Activated CD4-positive, alpha-beta memory T cell treated with anti-CD3 and anti-CD28 coated beads for 36 hours (primary cell): ENCODE measurements at regions of chr5 and their contacts with region 1.

Region 1: DNA sequence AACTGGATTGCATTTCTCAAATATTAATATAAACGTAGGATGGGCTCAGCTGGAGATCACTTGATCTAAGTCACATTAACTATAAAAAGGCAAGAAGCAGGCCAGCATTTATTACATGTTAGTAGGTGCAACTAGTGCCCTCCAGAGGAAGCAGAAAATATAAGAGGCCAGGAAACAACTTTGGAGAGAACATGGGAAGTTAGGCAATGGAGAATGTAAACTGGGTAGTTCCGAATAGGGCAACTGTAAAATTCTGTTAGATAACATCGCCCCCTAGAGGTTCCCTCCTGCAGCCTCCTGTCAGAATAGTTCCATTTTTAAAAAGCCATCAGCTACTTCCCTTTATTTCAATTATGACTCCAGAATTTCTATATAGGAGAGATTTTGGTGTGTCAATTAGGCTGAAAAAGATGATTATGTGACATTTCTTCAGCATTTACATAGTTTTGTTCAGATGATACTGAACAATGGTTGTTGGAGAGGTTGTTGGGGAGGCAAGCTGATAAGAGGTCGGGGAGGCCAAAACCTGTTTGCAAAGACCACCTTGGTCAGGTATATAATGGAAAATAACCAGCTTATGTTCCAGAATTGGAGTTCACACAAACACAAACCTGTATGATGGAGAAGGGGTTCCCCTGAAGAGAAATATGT is 22.4 kb downstream of the CCL28 start:
- DNase-seq: peak; percentile 58
- H3K4me3 Mint-ChIP-seq: no peak overlapping the region
- H3K27ac Mint-ChIP-seq: no peak overlapping the region
- H3K4me1 Mint-ChIP-seq: peaks cover 31% of the 10 kb centered on the region
- H3K27me3 Mint-ChIP-seq: no peaks in the 10 kb centered on the region

Region 2: DNA sequence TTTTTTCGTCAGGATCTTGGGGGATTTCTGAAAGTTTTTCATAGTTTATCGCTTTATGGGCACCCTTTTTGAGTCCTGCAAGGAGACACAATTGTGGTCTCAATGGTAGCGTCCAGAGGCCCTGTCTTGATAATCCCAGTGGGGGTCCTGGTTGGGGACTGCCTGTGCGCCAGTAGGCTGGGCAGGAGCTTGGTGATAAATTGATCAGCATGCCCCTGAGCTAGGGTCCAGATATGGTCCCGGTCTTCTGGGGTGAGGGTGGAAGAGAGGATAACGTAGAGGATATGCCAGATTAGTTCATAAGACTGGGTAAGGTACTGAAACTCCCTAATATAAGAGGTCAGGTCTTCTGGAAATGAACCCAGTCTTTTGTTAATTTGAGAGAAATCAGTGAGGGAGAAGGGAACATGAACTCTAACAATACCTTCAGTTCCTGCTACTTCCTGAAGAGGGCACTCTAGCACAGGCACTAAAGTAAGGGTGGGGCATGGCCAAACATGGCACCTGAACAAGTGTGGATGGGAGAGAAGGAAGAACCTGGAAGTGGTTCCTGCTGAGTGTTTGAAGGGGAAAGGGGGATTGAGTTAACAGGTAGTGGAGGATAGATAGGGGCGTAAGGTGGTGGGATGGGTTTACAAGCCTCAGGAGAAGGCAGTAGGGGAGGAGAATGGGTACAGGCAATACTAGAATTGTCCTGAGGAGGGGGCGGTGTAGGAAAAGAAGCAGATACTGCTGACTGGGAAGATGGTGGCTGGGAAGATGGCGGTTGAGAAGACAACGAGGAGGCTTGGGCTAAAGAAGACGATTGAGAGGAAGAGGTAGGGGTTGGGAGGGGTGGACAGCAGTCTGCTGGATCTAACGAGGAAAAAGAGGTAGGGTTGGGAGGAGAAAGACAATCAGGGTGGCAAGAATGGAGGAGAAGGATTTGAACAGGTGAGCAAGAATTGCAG is 315.9 kb before region 1 on chr5:
- CTCF ChIA-PET with region 1: interaction called, 30 read pairs
- POLR2A ChIA-PET with region 1: no interaction called
- intact Hi-C with region 1: loop called (anchors 1 kb)
- DNase-seq: peak; percentile 58
- H3K4me3 Mint-ChIP-seq: no peak overlapping the region
- H3K27ac Mint-ChIP-seq: no peak overlapping the region
- H3K4me1 Mint-ChIP-seq: peaks cover 39% of the 10 kb centered on the region
- H3K27me3 Mint-ChIP-seq: no peaks in the 10 kb centered on the region

Region 3: GRCh38 chr5:43110606-43111442 is 279.0 kb before region 1 on chr5:
- CTCF ChIA-PET with region 1: interaction called, 26 read pairs
- POLR2A ChIA-PET with region 1: no interaction called
- intact Hi-C with region 1: loop called (anchors 1 kb)
- DNase-seq: peak; percentile 64
- H3K4me3 Mint-ChIP-seq: peak overlapping the region; percentile 20
- H3K27ac Mint-ChIP-seq: peak overlapping the region; percentile 35
- H3K4me1 Mint-ChIP-seq: peaks cover 40% of the 10 kb centered on the region
- H3K27me3 Mint-ChIP-seq: no peaks in the 10 kb centered on the region

Region 4: GRCh38 chr5:43227655-43228054 is 162.1 kb before region 1 on chr5:
- CTCF ChIA-PET with region 1: interaction called, 75 read pairs
- POLR2A ChIA-PET with region 1: no interaction called
- intact Hi-C with region 1: loop called (anchors 1 kb)
- DNase-seq: no peak
- H3K4me3 Mint-ChIP-seq: no peak overlapping the region
- H3K27ac Mint-ChIP-seq: no peak overlapping the region
- H3K4me1 Mint-ChIP-seq: no peaks in the 10 kb centered on the region
- H3K27me3 Mint-ChIP-seq: no peaks in the 10 kb centered on the region

Region 5: GRCh38 chr5:43236653-43237355 is 153.0 kb before region 1 on chr5:
- CTCF ChIA-PET with region 1: interaction called, 75 read pairs
- POLR2A ChIA-PET with region 1: no interaction called
- intact Hi-C with region 1: loop called (anchors 1 kb)
- DNase-seq: no peak
- H3K4me3 Mint-ChIP-seq: no peak overlapping the region
- H3K27ac Mint-ChIP-seq: no peak overlapping the region
- H3K4me1 Mint-ChIP-seq: peaks cover 5% of the 10 kb centered on the region
- H3K27me3 Mint-ChIP-seq: peaks cover 4% of the 10 kb centered on the region

Region 6: DNA sequence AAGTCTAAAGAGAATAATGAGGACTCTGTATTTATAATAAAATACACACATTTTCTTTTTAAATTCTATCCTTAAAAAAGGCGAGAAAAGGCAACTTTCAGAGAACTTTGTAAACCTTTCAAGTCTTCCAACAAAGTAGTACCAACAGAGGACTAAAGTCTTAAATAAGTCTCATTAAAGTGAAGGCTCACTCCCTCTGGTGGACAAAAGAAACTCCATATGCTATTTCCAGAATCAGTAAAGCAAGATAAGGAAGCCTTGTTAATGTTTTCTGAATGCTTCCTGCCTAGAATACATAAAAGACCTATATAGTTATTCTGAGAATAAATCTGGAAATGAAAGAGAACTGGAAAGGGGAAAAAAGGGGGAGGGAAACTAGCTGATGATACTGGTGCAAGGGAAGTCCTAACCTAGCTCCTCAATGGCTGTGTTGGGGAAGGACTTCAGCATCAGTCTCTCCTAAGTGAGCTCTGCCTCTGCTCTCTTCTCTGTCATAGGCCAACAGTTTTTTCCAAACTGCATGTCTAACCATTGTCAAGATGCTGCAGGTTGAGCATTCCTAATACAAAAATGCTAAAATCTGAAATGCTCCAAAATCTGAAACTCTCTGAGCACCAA is 83.7 kb before region 1 on chr5:
- CTCF ChIA-PET with region 1: interaction called, 29 read pairs
- POLR2A ChIA-PET with region 1: no interaction called
- intact Hi-C with region 1: loop called (anchors 1 kb)
- DNase-seq: no peak
- H3K4me3 Mint-ChIP-seq: peak overlapping the region; percentile 2
- H3K27ac Mint-ChIP-seq: peak overlapping the region; percentile 78
- H3K4me1 Mint-ChIP-seq: peaks cover 84% of the 10 kb centered on the region
- H3K27me3 Mint-ChIP-seq: no peaks in the 10 kb centered on the region

Region 7: GRCh38 chr5:43592363-43592762 is 202.6 kb after region 1 on chr5:
- CTCF ChIA-PET with region 1: no interaction called
- POLR2A ChIA-PET with region 1: no interaction called
- intact Hi-C with region 1: no loop called
- DNase-seq: no peak
- H3K4me3 Mint-ChIP-seq: no peak overlapping the region
- H3K27ac Mint-ChIP-seq: no peak overlapping the region
- H3K4me1 Mint-ChIP-seq: no peaks in the 10 kb centered on the region
- H3K27me3 Mint-ChIP-seq: no peaks in the 10 kb centered on the region

Region 8: GRCh38 chr5:43602461-43603343 is 212.9 kb after region 1 on chr5 and contains the start of gene NNT:
- CTCF ChIA-PET with region 1: interaction called, 4 read pairs
- POLR2A ChIA-PET with region 1: no interaction called
- intact Hi-C with region 1: loop called (anchors 10 kb)
- DNase-seq: peak; percentile 84
- H3K4me3 Mint-ChIP-seq: peak within 1 kb of the TSS; percentile 97
- H3K27ac Mint-ChIP-seq: peak within 1 kb of the TSS; percentile 93
- H3K4me1 Mint-ChIP-seq: peaks cover 35% of the 10 kb centered on the region
- H3K27me3 Mint-ChIP-seq: no peaks in the 10 kb centered on the region
- total RNA-seq, gene NNT: 96.6 to 99.9 TPM